ENCODE measurements at regions of chr9 and their contacts with region 1.

Region 1: DNA sequence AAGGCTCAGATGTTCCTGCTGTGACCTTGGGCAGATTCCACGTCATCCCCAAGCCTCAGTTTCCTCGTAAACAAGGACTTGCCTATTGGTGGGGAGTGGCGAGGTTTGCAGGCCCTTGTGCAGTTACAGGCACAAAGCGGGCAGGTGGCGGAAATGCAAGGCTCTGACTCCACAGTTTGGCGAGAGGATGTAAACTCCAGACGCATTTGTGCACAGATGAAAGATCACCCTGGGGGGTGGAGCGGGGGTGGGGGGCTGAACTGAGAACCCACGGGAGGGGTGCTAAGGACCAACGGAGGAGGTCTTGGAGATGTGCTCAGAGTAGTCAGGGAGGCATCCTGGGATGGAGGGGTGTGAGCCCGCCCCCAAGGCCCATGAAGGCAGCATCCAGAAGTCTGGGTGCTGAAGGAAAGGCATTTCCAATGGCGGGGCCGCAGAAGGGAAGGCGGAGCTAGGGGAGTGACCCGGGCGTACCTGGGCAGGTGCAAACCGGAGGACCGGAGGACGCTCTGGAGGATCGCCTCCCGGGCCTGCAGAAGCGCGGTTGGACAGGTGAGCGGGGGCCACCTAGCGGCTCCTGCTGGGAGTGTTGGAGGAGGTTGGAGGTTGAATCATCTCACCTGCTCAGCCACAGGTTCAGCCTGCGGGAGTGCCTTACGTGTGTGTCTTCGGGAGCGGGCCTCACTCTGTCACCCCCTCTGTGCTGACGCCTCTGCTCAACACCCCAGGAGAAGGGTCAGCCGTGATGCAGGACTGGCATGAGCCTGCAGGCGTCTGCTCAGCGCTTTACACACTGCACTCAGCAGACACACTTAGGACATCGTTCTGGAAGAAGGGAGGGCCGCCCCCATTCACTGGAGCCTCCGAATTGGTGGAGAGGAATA is 1.9 kb upstream of the FIBCD1 start:
- DNase-seq: no peak
- ATAC-seq: peak; percentile 63
- H3K4me3 ChIP-seq: no peak overlapping the region
- H3K27ac ChIP-seq: no peak overlapping the region
- H3K4me1 ChIP-seq: peaks cover 11% of the 10 kb centered on the region
- H3K27me3 ChIP-seq: no peaks in the 10 kb centered on the region
- CTCF ChIP-seq: peak; percentile 91

Region 2: GRCh38 chr9:130893341-130894101 is 47.4 kb before region 1 on chr9:
- CTCF ChIA-PET with region 1: no interaction called
- POLR2A ChIA-PET with region 1: no interaction called
- in situ Hi-C with region 1: no loop called
- intact Hi-C with region 1: loop called (anchors 10 kb)
- DNase-seq: no peak
- ATAC-seq: peak; percentile 31; the same call in 1 of the 2 replicates
- H3K4me3 ChIP-seq: no peak overlapping the region
- H3K27ac ChIP-seq: no peak overlapping the region
- H3K4me1 ChIP-seq: no peaks in the 10 kb centered on the region
- H3K27me3 ChIP-seq: no peaks in the 10 kb centered on the region
- CTCF ChIP-seq: no peak

Region 3: DNA sequence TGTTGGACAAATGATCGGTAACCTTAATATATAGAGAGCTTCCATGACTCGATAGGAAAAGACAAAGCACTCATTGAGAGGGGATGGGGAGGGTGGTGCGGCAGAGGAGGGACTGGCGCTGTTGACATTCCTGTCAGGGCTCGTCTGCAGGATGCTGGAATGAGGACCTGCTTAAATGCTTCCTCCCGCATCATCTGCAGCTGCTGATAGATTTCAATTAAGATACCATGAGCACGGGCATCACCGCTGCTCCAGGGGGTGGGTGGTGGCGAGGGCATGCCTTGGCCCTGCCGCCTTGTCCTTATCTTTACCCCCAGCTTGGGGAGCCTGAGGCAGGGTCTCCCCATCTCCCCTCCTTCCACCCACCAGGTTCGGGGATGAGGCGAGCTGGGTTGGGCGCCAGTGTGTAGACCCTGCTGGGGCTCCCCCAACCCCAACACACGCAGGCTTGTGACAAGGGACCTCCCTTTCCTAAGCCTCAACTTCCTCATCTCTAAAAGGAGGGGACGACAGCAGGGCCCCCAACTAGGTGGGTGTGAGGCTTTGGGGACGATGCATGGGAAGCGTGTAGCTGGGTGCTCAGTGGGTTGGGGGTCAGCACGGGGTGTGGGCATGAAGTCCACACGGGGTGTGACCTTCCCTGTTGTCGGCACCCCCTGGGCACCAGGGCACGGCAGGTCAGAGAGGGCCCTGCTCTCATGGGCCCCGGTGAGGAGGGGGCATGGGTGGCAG is 32.6 kb before region 1 on chr9:
- CTCF ChIA-PET with region 1: no interaction called
- POLR2A ChIA-PET with region 1: no interaction called
- in situ Hi-C with region 1: no loop called
- intact Hi-C with region 1: no loop called
- DNase-seq: no peak
- ATAC-seq: no peak
- H3K4me3 ChIP-seq: no peak overlapping the region
- H3K27ac ChIP-seq: no peak overlapping the region
- H3K4me1 ChIP-seq: 0 out of 2 replicates have a peak, but pooled peaks cover 4% of the 10 kb centered on the region
- H3K27me3 ChIP-seq: no peaks in the 10 kb centered on the region
- CTCF ChIP-seq: no peak

Region 4: DNA sequence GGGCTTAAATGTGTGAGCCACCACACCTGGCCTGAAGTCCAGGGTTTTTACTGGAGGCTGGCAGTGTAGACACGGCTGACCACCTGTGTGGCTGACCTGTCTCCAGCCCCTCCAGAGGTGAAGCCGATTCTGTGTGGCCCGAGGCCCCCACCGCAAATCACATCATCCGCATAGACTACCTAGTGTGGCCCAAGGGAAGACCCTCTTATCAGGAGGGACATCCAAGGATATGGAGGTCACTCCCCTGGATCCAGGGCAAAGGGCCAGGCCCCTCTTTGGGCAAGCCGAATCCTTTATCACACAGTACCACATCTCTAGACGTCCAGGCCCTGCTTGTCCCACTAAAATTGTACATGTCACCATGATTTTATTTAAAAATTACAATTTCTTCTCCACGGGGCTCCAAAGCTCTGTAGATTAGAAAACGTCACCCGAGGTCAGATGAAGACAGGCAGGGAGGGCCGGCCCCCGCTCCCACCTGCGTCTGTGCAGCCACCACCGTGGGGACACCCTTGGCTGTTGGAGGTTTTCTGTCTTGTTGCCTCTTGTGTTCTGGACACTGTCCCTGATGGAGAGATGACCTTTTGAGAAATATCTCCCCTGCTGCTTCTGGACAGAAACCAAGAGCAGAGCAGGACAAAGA is 88.1 kb after region 1 on chr9:
- CTCF ChIA-PET with region 1: no interaction called
- POLR2A ChIA-PET with region 1: interaction called, 10 read pairs
- in situ Hi-C with region 1: no loop called
- intact Hi-C with region 1: no loop called
- DNase-seq: no peak
- ATAC-seq: no peak
- H3K4me3 ChIP-seq: no peak overlapping the region
- H3K27ac ChIP-seq: no peak overlapping the region
- H3K4me1 ChIP-seq: no peaks in the 10 kb centered on the region
- H3K27me3 ChIP-seq: no peaks in the 10 kb centered on the region
- CTCF ChIP-seq: no peak

Region 5: DNA sequence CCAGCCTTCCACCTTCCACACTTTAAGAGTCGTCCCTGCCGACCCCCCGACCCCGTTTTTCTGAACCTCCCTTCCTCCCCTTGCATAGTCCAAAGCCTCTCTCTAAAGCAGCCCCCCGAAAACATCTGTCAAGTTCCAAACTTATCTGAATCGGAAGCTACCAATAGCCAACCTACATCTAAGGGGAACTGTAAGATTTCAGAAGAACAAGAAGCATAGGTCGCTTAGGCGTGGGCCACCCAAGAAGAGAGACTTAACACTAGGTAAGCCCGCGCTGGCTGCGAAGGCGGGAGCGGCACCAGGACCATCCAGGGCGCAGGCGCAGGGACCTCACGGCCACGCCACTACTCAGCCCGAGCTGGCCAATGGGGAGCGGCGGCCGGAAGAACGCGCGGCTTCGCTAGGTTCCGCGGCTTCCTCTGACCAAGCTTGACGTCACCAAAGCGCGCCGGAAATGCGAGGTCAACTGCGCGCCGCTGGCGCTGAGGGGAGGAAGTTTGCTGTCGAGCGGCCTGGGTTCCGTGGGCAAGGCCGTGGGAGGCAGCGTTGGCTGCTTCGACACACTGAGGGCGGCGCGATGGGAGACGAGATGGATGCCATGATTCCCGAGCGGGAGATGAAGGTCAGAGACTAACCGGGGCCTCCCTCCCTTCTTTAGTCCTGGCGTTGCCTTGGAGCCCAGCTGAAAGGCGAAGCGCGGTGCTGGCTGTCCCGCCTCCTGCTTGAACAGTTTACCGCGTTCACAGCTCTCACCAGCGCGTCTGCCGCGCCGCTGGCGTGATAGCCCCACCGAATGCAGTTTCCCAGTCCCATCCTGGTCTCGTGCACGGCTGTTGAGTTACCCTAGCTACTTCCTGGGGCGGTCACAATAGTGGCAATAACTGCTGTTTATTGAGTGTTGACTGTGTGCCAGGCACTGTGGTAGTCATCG is 184.5 kb after region 1 on chr9 and contains the start of gene NUP214:
- CTCF ChIA-PET with region 1: no interaction called
- POLR2A ChIA-PET with region 1: no interaction called
- in situ Hi-C with region 1: no loop called
- intact Hi-C with region 1: no loop called
- DNase-seq: peak; percentile 74
- ATAC-seq: peak; percentile 100
- H3K4me3 ChIP-seq: peak within 1 kb of the TSS; percentile 96
- H3K27ac ChIP-seq: peak within 1 kb of the TSS; percentile 95
- H3K4me1 ChIP-seq: peaks cover 6% of the 10 kb centered on the region; the same call in 1 of the 2 replicates
- H3K27me3 ChIP-seq: no peaks in the 10 kb centered on the region
- CTCF ChIP-seq: no peak
- total RNA-seq, gene NUP214: 34.9 TPM